ENCODE measurements at regions of chr22 and their contacts with region 1.

Region 1: DNA sequence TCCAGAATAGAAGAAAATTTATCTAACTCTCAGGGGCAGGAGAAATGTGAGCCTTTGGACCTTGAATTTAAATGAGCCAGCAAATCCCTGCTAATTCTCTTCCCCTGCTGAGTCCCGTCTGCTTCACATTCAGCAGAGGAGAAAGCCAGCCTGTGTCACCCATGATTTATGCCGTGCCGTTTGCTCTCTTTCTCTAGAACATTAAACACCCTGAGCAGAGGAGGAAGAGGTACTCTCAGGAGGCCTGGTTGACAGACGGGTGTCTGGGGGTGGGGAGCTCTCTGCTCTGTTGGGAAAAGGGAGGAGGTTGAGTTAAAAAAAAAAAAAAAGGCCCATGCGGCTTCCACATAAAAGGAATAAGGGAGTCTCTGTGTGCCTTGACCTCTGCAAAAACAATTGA is 11.3 kb upstream of the MTMR3 start:
- DNase-seq: no peak
- H3K4me3 Mint-ChIP-seq: no peak overlapping the region
- H3K27ac Mint-ChIP-seq: no peak overlapping the region
- H3K4me1 Mint-ChIP-seq: peaks cover 12% of the 10 kb centered on the region
- H3K27me3 Mint-ChIP-seq: peaks cover 17% of the 10 kb centered on the region

Region 2: GRCh38 chr22:29744902-29745301 is 126.8 kb before region 1 on chr22:
- CTCF ChIA-PET with region 1: no interaction called
- POLR2A ChIA-PET with region 1: no interaction called
- DNase-seq: no peak
- H3K4me3 Mint-ChIP-seq: no peak overlapping the region
- H3K27ac Mint-ChIP-seq: no peak overlapping the region
- H3K4me1 Mint-ChIP-seq: peaks cover 3% of the 10 kb centered on the region
- H3K27me3 Mint-ChIP-seq: no peaks in the 10 kb centered on the region

Region 3: GRCh38 chr22:29848111-29848510 is 23.6 kb before region 1 on chr22:
- CTCF ChIA-PET with region 1: interaction called, 11 read pairs
- POLR2A ChIA-PET with region 1: no interaction called
- DNase-seq: no peak
- H3K4me3 Mint-ChIP-seq: no peak overlapping the region
- H3K27ac Mint-ChIP-seq: no peak overlapping the region
- H3K4me1 Mint-ChIP-seq: no peaks in the 10 kb centered on the region
- H3K27me3 Mint-ChIP-seq: no peaks in the 10 kb centered on the region

Region 4: DNA sequence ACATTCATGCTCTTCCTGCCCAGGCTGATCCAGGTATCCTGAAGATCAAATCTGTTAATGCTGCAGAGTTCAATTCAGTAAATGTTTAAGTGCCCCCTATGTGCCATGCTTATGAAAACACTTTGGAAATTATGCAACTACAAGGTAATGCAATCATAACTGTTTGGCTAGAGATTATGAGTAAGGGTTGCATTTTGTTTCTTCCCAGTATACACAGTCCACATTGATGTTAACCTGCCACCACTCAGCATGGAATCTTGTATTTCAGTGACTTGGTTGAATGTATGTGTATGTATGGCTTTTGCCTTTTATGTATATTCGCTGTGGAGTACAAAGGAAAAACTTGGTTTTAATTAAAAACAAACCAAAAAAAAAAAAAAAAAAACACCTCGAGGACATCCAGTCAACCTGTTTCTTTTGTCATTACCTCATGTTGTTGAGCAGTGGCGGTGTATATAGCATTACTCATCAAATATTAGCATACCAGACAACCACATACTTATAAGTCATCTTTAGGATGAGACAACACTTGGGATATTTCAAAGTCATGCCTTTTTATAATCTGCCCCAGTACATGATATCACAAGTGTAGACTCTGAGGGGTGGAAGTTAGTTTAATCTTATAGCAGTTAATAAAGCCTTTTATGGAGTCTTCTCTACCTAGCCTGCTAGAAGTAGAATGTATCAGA is 122.5 kb after region 1 on chr22:
- CTCF ChIA-PET with region 1: no interaction called
- POLR2A ChIA-PET with region 1: no interaction called
- DNase-seq: no peak
- H3K4me3 Mint-ChIP-seq: no peak overlapping the region
- H3K27ac Mint-ChIP-seq: no peak overlapping the region
- H3K4me1 Mint-ChIP-seq: peaks cover 5% of the 10 kb centered on the region
- H3K27me3 Mint-ChIP-seq: no peaks in the 10 kb centered on the region